Astrocyte of the cerebellum (primary cell): ENCODE measurements at regions of chr3 and their contacts with region 1.

Region 1: DNA sequence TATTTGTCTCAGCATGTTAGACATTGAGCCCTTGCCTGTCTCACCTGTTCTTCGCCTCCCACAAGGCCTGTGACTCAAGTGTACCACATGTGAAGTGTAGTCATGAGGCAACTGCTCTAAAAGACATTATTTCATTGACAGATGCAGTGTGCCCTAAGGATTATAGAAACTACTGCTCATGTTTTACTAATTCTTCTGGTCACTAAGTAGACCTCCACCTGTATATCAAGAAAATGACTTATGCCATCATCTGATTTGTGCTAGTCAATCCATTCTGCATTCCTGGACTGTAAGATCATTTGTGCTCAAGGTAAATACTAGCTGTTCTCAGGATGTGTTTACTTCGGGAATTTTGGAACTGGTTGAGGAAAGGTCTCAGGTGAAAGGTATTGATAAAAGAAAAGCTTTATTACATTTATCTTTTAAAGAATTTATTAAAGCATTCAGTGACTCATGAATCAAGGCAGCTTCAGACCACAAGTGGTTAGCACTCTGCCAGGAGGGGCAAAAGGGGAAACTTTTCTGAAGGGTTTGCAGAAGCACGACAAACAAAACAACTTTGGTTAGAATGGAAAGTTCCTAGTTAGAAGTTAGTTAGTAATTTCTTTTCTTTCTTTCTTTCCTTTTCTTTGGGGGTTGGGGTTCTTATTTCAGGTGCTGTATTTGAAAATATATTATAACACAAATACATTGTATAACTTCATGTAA is 465.3 kb upstream of the CBLB start:
- DNase-seq: peak; percentile 85
- H3K4me3 ChIP-seq: no peak overlapping the region
- CTCF ChIP-seq: no peak

Region 2: DNA sequence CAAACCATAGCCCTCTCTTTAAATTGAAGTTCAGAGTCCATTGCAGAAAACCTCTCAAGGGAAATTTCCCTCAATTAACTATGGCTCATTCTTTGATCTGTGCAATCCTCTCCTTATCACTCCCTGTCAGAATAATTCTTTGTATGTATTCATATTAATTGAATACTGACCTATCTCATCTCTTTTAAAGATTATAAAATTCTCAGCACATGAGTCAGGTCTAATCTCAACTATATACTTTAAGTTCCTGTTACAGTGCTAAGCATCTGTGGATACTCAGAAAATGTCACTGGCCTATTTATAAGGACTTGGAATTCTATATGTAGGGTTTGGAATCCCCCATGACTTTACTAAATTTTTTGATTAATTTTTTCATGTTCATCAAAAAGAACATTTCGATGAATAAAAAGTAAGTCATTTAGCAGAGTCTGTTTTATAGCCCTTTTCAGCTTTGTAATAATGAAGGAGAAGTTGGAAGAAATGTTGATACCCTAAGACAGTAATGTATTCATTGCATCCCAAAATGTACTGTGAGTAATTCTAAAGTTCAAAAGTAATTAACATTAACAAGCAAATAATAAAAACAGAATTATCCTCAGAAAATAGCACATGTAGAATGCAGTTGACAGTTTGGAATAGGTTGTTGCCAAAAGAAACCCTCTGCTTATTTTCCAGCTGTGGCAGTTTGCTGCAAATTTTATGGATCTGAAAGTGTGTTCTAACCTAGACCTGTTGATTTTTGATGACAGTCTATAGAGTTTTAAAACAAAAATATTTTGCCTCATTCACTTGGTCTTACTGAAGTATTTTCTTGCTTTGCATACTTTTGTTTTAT is 38.1 kb after region 1 on chr3:
- in situ Hi-C with region 1: no loop called
- DNase-seq: no peak
- H3K4me3 ChIP-seq: no peak overlapping the region
- CTCF ChIP-seq: no peak

Region 3: DNA sequence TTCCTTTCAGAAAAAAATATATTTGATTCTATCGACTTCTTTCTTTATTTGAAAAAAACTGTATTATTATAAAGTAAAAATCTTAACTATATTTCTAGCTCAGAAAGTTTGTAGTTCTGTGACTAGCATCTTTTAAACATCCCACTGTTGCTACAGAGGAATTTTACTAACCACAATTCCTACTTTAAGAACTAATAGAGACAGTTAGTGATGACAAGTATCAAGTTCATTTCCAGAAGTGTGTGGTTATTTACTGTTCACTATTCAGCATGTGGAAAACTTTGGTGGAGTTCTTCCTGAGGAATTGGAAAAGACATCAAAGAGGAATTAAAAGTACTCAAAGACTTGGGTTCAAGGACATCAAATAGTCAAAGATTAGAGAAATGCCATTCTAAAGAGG is 58.9 kb after region 1 on chr3:
- in situ Hi-C with region 1: loop called (anchors 5 kb)
- DNase-seq: peak; percentile 13
- H3K4me3 ChIP-seq: no peak overlapping the region
- CTCF ChIP-seq: no peak